ENCODE measurements at regions of chr17 and their contacts with region 1.

Region 1: GRCh38 chr17:164303-165235 is 16.9 kb downstream of the DOC2B start:
- DNase-seq: peak; percentile 64 to 83 (median 73)
- ATAC-seq: peak; percentile 81 to 84
- H3K4me3 ChIP-seq: no peak overlapping the region
- H3K27ac ChIP-seq: no peak overlapping the region
- H3K4me1 ChIP-seq: no peaks in the 10 kb centered on the region
- H3K27me3 ChIP-seq: no peaks in the 10 kb centered on the region

Region 2: DNA sequence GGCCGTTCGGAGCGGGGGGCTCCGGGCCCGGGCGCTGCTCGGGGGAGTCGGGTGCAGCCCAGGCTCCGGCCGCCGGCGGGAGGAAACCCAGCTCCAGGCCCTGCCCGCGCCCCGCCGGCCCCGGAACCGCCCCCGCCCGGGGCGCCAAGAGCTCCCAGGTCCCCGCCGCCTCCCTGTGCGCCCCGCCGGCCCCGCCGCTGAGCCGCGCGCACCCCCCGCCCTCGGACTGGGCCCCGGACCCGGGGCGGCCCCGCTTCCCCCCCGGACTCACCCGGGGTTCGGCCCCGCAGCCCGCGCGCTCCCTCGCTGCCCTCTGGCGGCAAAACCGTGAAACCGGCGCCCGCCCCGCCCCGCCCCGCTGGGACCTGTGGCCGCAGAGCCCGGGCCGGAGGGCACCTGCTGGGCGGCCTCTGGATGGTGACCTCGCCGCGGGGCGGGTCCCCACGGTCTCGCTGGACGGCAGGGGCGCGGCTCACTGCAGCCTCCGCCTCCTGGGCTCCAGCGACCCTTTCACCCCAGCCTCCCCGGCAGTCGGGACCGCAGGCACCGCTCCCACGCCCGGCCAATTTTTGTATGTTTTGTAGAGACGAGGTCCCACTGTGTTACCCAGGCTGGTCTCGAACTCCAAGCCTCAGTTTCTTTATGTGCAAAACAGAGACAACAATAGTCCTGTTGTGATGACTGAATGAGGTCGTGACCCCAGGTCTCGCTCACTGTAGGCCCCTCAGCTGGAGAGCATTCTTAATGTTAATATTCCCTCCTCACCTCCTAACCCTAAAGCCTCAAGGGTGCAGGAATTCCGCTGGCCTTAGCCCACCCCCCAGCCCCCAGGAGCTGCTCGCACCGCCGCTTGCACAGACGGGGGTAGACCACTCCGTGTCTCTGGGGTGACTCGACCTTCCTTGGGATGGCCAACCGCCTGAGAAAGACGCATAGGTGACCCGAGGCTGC is 221.6 kb after region 1 on chr17:
- intact Hi-C with region 1: loop called in 3 of 4 experiments (anchors 5 kb)
- DNase-seq: peak; percentile 79 to 94 (median 92)
- ATAC-seq: peak; percentile 81 to 85
- H3K4me3 ChIP-seq: peak overlapping the region; percentile 89
- H3K27ac ChIP-seq: peak overlapping the region; percentile 5
- H3K4me1 ChIP-seq: no peaks in the 10 kb centered on the region
- H3K27me3 ChIP-seq: no peaks in the 10 kb centered on the region

Region 3: DNA sequence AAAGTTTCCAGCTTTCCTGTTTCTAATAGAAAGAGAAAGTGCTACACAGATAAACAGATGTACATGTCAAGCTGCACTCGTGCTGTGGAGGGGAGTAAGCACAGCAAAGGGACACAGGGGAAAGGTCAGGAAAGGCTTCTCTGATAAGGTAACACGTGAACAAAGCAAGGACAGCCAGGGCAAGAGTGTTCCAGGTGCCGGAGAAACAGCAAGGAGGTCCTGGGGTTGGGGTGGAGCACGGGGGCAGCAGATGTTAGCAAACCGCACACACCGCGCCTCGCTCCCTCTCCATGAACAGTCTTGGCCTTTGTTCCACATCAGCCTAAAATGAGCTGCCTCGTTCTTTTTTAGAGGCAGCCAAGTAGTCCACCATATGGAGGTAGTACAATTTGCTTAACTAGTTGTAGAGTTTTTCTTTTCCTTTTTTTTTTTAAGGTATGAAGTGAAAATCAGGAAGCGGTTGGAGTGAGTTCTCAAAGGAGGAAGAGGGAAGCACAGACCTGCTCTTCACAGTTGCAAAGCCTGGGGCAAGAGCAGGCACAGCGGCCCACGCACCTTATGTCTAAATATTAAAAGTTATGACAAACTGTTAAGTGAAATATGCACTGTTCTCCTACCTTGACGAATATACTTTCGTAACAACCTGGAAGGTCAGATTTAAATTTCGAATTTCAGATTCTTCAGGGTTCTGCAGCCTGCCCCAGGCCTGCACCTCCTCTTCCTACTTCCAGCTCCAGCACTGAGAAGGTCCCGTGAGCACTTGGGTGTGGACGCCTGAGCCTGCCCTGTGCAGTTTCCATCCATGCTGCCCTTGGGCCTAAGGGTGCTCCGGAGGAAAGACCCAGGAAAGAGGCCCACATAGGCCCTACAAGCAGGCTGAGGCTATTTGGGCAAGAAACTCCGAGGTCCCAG is 229.5 kb after region 1 on chr17:
- intact Hi-C with region 1: loop called in 3 of 4 experiments (anchors 5 kb)
- DNase-seq: peak in 1 of 3 donors; percentile 20
- ATAC-seq: peak; percentile 48 to 52
- H3K4me3 ChIP-seq: no peak overlapping the region
- H3K27ac ChIP-seq: no peak overlapping the region
- H3K4me1 ChIP-seq: no peaks in the 10 kb centered on the region
- H3K27me3 ChIP-seq: no peaks in the 10 kb centered on the region

Region 4: DNA sequence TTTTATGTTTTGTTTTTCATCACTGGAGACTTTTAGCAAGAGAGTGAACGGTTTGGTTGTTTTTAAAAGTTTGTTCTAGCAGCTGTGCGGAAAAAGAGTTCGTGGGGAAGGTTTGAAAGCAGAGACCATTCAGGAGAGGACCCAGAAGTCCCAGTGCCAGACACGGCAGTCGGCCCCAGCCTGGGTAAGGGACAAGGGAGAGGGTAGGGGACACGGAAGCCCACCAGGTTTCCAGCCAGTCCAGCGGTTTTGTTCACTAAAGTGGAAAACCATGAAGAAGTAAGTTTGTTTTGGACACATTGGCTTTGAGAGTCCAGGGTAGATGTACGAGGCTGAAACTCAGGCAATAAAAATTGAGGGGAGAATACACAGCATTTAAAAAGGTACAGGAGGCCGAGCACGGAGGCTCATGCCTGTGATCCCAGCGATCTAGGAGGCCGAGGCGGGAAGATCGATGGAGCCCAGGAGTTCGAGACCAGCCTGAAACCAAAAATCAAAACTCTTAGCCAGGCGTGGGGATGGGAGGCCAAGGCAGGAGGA is 244.8 kb after region 1 on chr17:
- intact Hi-C with region 1: no loop called
- DNase-seq: no peak
- ATAC-seq: no peak
- H3K4me3 ChIP-seq: peak overlapping the region; percentile 5
- H3K27ac ChIP-seq: peak overlapping the region; percentile 77
- H3K4me1 ChIP-seq: no peaks in the 10 kb centered on the region
- H3K27me3 ChIP-seq: no peaks in the 10 kb centered on the region